PC-9 (cell line): ENCODE measurements at regions of chr7 and their contacts with region 1.

Region 1: GRCh38 chr7:75971961-75972763 is 22.2 kb downstream of the TMEM120A start:
- DNase-seq: no peak
- H3K4me3 ChIP-seq: no peak overlapping the region
- H3K27ac ChIP-seq: no peak overlapping the region
- H3K4me1 ChIP-seq: no peaks in the 10 kb centered on the region
- H3K27me3 ChIP-seq: no peaks in the 10 kb centered on the region
- CTCF ChIP-seq: peak; percentile 44; the same call in 1 of the 2 replicates

Region 2: DNA sequence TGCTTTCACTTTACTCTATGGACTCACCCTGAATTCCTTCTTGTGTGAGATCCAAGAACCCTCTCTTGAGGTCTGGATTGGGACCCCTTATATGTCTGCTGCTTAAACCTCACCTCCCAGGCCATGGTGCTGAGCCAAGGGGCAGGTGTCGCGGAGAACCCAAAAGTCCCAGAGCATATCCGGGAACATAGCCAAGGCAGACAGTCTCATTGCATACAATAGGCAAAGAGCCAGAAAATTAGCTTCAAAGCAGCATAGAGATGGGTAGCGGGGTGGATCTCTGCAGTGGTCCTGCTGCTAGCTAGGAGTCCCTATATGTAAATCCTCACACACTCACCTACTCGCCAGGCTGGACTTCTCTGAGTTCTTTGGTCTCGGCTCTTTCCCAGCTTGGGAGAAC is 164.1 kb before region 1 on chr7:
- CTCF ChIA-PET with region 1: no interaction called
- POLR2A ChIA-PET with region 1: no interaction called
- intact Hi-C with region 1: no loop called
- DNase-seq: no peak
- H3K4me3 ChIP-seq: no peak overlapping the region
- H3K27ac ChIP-seq: no peak overlapping the region
- H3K4me1 ChIP-seq: no peaks in the 10 kb centered on the region
- H3K27me3 ChIP-seq: no peaks in the 10 kb centered on the region
- CTCF ChIP-seq: no peak

Region 3: GRCh38 chr7:75899091-75899490 is 73.1 kb before region 1 on chr7:
- CTCF ChIA-PET with region 1: no interaction called
- POLR2A ChIA-PET with region 1: no interaction called
- intact Hi-C with region 1: no loop called
- DNase-seq: no peak
- H3K4me3 ChIP-seq: no peak overlapping the region
- H3K27ac ChIP-seq: no peak overlapping the region
- H3K4me1 ChIP-seq: peaks cover under 1% of the 10 kb centered on the region
- H3K27me3 ChIP-seq: no peaks in the 10 kb centered on the region
- CTCF ChIP-seq: no peak

Region 4: DNA sequence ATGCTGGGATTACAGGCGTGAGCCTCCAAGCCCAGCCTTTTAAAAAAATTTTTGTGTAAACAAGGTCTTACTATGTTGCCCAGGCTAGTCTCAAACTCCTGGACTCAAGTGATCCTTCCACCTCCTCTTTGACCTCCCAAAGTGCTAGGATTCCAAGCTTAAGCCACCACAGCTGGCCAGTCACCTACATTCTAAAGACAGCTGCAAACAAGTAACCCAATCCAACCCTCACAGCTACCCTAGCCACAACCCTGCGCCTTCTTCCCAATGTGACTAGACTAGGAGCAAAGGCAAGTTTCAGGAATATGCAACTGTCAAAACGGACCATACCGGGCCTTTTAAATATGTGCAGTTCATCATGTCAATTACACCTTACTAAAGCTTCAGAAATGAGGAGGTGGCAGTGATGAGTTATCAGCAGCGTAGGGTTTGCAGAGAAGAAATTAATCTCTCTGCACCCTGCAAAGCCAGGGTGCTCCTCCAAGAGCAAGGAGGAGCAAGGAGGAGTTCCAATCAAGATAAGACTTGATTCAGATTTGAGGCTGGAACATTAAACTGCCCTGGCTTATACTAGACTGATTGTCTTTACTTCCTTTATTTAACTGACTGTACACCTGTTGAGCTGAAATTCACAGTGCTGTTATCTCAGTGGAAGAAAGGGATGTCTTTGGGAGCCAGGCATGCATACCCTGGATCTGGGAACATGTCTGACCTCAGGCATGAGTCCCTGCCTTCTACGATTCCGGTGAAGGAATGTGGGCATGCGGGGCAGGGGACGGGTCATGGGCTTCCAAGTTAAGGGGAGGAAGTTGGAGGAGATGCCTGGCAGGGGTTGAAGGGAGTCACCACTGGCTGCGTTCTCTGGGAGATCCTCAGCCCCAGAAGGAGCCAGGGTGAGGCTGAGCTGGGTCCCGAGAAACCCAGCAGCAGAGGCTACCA is 37.8 kb after region 1 on chr7:
- CTCF ChIA-PET with region 1: no interaction called
- POLR2A ChIA-PET with region 1: interaction called, 21 read pairs
- intact Hi-C with region 1: no loop called
- DNase-seq: no peak
- H3K4me3 ChIP-seq: no peak overlapping the region
- H3K27ac ChIP-seq: no peak overlapping the region
- H3K4me1 ChIP-seq: no peaks in the 10 kb centered on the region
- H3K27me3 ChIP-seq: no peaks in the 10 kb centered on the region
- CTCF ChIP-seq: no peak

Region 5: GRCh38 chr7:76333511-76334101 is 361.4 kb after region 1 on chr7:
- CTCF ChIA-PET with region 1: no interaction called
- POLR2A ChIA-PET with region 1: no interaction called
- intact Hi-C with region 1: no loop called
- DNase-seq: no peak
- H3K4me3 ChIP-seq: no peak overlapping the region
- H3K27ac ChIP-seq: peak overlapping the region; percentile 47
- H3K4me1 ChIP-seq: peaks cover 38% of the 10 kb centered on the region
- H3K27me3 ChIP-seq: no peaks in the 10 kb centered on the region
- CTCF ChIP-seq: no peak